Gastrocnemius medialis (tissue), 4 donors: ENCODE measurements at regions of chr20 and their contacts with region 1.

Region 1: DNA sequence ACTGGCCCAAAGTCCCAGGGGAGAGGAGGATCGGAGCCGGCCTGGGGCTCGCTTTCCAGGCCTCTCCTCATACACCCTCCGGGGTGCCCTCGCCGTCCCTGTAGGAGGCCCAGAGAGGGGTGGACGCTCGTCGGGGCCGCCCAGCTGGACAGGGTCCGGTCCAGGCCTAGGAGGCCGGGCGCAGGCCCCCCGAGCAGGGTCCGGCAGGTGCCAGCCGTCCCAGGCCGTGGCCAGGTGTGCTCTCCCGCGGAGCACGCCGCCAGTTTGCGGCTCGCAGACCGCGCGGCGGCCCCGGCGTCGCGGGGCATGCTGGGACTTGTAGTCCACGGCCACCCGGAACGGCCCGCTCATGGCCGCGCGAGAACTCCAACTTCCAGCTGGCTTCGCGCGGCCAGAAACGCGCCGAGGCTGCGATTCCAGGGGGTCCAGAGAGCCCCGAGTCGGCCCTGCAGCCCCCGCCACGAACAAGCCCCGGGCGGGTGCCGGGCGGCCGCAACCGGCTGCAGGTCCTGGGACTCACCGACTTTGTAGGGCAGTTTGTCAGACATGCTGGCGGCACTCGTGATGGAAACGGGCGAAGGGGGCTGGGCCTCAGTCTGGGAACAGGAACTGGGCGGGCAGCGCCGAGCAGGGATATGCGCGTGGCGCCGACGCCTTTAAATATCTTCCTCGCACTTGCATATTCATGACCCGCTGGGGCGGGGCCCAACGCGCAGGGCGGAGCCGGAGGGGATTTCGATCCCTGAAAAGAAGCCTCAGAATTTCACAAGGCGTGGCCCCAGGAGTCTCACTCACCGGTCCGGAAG is at the start of gene AHCY:
- DNase-seq: peak; percentile 92 to 94
- ATAC-seq: peak; percentile 96
- H3K4me3 ChIP-seq: peak within 1 kb of the TSS; percentile 85 to 98 (median 95)
- H3K27ac ChIP-seq: peak within 1 kb of the TSS; percentile 95 to 99 (median 98)
- H3K4me1 ChIP-seq: peaks cover 21 to 26% of the 10 kb centered on the region in 2 donors
- H3K27me3 ChIP-seq: no peaks in the 10 kb centered on the region
- CTCF ChIP-seq: peak in 2 of 5 experiments; percentile 12 to 25
- POLR2A ChIP-seq: peak; percentile 81 to 96
- total RNA-seq, gene AHCY: 81.7 to 110 (median 98.6) TPM

Region 2: DNA sequence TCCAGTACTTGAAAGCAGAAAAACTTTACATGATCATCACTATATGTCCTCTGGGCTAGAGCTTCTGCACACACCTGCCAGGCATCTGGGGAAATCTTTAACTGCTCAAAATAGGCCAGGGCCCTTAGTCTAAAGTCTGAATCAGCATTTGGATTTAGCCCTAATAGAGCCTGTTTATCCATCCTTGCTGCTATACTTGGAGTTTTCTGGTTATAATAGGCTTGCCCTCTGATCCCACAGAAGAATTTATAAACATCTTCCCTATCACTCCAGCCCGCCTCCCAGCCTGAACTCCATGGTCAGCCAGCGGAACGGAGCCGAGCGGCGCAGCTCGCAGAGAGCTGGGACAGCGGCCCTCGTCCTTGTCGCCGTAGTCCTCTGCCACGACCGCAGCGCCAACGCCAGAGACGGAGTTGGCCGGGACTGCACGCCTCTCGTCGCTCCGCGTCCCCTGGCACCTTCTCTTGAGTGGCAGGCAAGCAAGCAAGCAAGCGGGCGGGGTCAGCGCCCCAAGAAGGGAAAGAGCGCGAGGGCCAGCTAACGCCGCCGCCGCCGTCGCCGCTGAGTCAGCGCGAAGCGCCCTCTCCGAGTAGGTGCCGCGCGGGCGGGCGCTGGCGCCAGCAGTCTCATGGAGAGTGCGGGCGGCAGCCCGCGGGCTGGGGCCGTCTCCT is 87.1 kb before region 1 on chr20:
- in situ Hi-C with region 1: no loop called
- intact Hi-C with region 1: loop called (anchors 5 kb)
- DNase-seq: peak; percentile 84 to 95
- ATAC-seq: peak; percentile 94 to 96
- H3K4me3 ChIP-seq: peak overlapping the region; percentile 42 to 54 (median 49)
- H3K27ac ChIP-seq: peak overlapping the region; percentile 81 to 83 (median 82)
- H3K4me1 ChIP-seq: peaks cover 4 to 13% of the 10 kb centered on the region in 2 donors
- H3K27me3 ChIP-seq: no peaks in the 10 kb centered on the region
- CTCF ChIP-seq: peak in 2 of 5 experiments; percentile 8 to 35
- POLR2A ChIP-seq: peak; percentile 32 to 38

Region 3: DNA sequence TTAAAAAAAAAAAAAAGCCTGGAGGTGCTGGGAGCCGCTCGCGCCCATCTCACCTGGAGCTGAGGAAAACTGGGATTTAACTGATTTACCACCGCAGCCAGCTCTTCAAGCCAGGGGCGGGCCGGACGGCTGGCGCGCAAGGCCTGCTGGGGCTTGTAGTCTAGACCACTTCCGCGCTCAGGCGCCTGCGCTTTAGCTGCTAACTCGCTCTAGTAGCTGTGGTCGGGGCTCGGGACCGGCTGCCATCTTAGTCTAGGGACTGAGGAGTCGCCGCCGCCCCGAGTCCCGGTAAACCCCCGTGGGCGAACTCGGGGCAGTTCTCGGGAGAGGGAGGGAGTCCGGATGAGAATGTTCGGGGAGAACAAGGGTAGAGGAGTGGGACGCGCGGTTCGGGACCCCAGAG is 60.1 kb after region 1 on chr20 and contains the start of gene ITCH:
- in situ Hi-C with region 1: loop called in 1 of 4 experiments (anchors 5 kb)
- intact Hi-C with region 1: loop called (anchors 1 kb)
- DNase-seq: peak; percentile 95
- ATAC-seq: peak; percentile 99
- H3K4me3 ChIP-seq: peak within 1 kb of the TSS; percentile 86 to 91 (median 88)
- H3K27ac ChIP-seq: peak within 1 kb of the TSS; percentile 92 to 96 (median 94)
- H3K4me1 ChIP-seq: peaks cover 34 to 35% of the 10 kb centered on the region in 2 donors
- H3K27me3 ChIP-seq: no peaks in the 10 kb centered on the region
- CTCF ChIP-seq: no peak
- POLR2A ChIP-seq: peak; percentile 93
- total RNA-seq, gene ITCH: 32.9 to 55.2 (median 52.0) TPM

Region 4: GRCh38 chr20:34368547-34368946 is 65.6 kb after region 1 on chr20:
- in situ Hi-C with region 1: loop called in 1 of 4 experiments (anchors 5 kb)
- intact Hi-C with region 1: loop called (anchors 1 kb)
- DNase-seq: no peak
- ATAC-seq: no peak
- H3K4me3 ChIP-seq: no peak overlapping the region
- H3K27ac ChIP-seq: no peak overlapping the region
- H3K4me1 ChIP-seq: peaks cover 32% of the 10 kb centered on the region in 2 donors
- H3K27me3 ChIP-seq: no peaks in the 10 kb centered on the region
- CTCF ChIP-seq: no peak
- POLR2A ChIP-seq: no peak

Region 5: GRCh38 chr20:34516247-34517113 is 213.6 kb after region 1 on chr20 and contains the start of gene DYNLRB1:
- in situ Hi-C with region 1: loop called in 1 of 4 experiments (anchors 10 kb)
- intact Hi-C with region 1: loop called (anchors 2 kb)
- DNase-seq: peak; percentile 94 to 96
- ATAC-seq: peak; percentile 97 to 98
- H3K4me3 ChIP-seq: peak within 1 kb of the TSS; percentile 71 to 92 (median 78)
- H3K27ac ChIP-seq: peak within 1 kb of the TSS; percentile 88 to 96 (median 94)
- H3K4me1 ChIP-seq: peaks cover 39 to 41% of the 10 kb centered on the region in 2 donors
- H3K27me3 ChIP-seq: no peaks in the 10 kb centered on the region
- CTCF ChIP-seq: no peak
- POLR2A ChIP-seq: peak; percentile 78 to 85
- total RNA-seq, gene DYNLRB1: 115 to 216 (median 142) TPM

Region 6: DNA sequence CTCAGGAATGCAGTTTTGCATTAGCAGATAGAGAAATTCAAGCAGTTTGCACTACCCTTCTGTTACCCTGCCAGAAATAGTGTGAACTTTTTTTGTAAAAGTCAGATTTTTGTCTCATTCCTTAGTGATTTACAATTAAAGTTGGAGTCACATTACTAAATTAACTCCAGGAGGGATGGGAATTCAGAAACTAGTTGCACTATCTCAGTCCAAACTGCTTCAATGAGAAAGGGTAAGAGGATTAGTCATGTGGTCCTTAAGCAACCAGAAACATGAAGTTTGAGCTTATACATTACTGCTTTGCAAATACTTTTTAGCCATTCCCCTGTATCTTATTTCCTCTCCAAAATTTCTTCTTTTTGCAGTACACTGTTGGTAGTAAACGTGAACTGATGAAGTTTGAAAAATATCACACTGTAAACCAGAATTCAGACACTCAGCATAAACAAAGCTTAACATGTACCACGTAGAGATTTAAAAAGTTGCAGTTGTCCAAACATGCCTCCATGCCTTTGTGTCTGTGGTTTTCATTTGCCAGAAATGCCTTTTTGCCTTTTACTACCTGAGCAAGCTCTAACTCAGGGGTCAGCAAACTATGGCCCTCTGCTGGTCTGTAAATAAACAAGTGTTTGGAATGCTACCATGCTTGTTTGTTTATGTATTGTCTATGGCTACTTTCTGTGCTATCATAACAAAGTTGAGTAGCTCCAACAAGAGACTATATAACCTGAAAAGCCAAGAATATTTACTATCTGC is 451.0 kb after region 1 on chr20:
- in situ Hi-C with region 1: loop called in 2 of 4 experiments (anchors 25 kb)
- intact Hi-C with region 1: no loop called
- DNase-seq: no peak
- ATAC-seq: no peak
- H3K4me3 ChIP-seq: no peak overlapping the region
- H3K27ac ChIP-seq: no peak overlapping the region
- H3K4me1 ChIP-seq: no peaks in the 10 kb centered on the region
- H3K27me3 ChIP-seq: no peaks in the 10 kb centered on the region
- CTCF ChIP-seq: peak in 1 of 5 experiments; percentile 25
- POLR2A ChIP-seq: no peak

Region 7: DNA sequence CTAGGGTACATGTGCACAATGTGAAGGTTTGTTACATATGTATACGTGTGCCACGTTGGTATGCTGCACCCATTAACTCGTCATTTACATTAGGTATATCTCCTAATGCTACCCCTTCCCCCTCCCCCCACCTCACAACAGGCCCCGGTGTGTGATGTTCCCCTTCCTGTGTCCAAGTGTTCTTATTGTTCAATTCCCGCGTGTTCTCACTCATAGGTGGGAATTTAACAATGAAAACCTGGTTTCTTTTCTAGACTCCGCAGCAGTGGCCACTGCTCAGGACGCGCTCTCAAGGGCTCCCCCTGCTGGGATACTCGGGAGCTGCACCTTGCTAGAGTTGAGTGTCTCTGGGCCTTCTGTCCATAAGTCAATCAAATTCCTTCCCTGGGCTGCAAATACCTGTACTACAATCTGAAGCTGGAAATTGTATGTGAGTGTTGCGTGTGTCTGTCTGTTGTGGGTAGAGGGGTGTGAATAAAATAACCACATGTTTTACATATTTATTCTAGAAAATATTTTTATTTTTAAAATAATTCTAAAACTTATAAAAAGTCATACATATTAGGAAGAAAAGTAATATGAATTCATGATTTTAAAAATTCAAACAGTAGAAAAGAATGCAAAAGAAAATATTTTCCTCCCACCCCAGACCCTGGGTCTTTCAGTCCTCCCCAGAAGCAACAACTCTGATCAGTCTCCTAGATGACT is 1144.3 kb after region 1 on chr20:
- in situ Hi-C with region 1: no loop called
- intact Hi-C with region 1: no loop called
- DNase-seq: peak; percentile 52 to 72
- ATAC-seq: peak; percentile 86 to 92
- H3K4me3 ChIP-seq: peak overlapping the region; percentile 50 to 65 (median 52)
- H3K27ac ChIP-seq: no peak overlapping the region
- H3K4me1 ChIP-seq: no peaks in the 10 kb centered on the region
- H3K27me3 ChIP-seq: peaks cover 0 to 5% (median 0%) of the 10 kb centered on the region in 3 donors
- CTCF ChIP-seq: peak; percentile 83 to 96 (median 90)
- POLR2A ChIP-seq: no peak